MCF 10A (cell line): ENCODE measurements at regions of chr10 and their contacts with region 1.

Region 1: DNA sequence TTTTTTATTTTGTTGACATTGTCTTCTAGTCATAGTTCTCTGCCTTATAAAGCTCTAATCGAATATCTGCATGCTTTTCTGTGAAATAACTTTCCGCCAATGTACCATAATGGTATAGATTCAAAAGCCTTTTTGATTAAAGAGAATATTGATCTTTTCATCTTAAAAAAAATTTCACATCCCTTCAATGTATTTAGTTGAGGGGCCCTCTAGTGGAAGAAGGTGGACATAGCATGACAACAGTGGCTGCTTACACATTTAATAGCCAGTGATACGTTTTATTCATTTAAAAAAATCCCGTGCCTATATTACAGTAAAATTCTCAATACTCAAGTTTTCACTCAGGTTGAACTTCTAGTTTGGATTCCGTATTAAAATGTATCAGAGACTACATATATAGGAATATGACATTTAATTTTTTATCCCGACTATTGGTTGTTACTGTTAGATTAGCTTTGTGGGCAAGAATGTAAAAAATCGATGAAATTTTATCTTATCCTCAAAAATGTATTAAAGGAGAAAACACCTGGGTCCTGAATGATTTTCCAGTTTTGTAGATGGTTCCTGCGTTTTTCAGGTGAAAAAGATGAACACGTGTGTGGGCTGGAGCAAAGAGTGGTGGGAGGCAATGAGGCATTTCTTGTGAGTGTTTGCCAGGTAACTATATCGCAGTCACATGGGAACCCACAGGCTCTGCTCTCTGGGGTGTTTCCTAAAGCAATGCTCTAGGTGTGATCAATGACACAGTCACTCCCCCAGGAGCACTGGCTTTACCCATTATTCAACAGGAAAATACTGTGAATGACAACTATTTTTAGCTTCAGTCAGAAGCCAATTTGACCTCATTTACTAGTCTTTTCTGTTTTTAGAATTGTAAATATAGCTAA is 24.1 kb upstream of the PNLIP start:
- DNase-seq: peak; percentile 62
- H3K4me3 Mint-ChIP-seq: no peak overlapping the region
- H3K27ac Mint-ChIP-seq: no peak overlapping the region
- H3K4me1 Mint-ChIP-seq: peaks cover 5% of the 10 kb centered on the region
- H3K27me3 Mint-ChIP-seq: no peaks in the 10 kb centered on the region
- CTCF ChIP-seq: peak; percentile 63

Region 2: GRCh38 chr10:116371737-116372136 is 149.9 kb before region 1 on chr10:
- CTCF ChIA-PET with region 1: no interaction called
- POLR2A ChIA-PET with region 1: no interaction called
- intact Hi-C with region 1: no loop called
- DNase-seq: no peak
- H3K4me3 Mint-ChIP-seq: no peak overlapping the region
- H3K27ac Mint-ChIP-seq: no peak overlapping the region
- H3K4me1 Mint-ChIP-seq: peaks cover 5% of the 10 kb centered on the region
- H3K27me3 Mint-ChIP-seq: no peaks in the 10 kb centered on the region
- CTCF ChIP-seq: no peak

Region 3: GRCh38 chr10:116417821-116418220 is 103.8 kb before region 1 on chr10:
- CTCF ChIA-PET with region 1: no interaction called
- POLR2A ChIA-PET with region 1: no interaction called
- intact Hi-C with region 1: no loop called
- DNase-seq: peak; percentile 54
- H3K4me3 Mint-ChIP-seq: no peak overlapping the region
- H3K27ac Mint-ChIP-seq: peak overlapping the region; percentile 57
- H3K4me1 Mint-ChIP-seq: peaks cover 27% of the 10 kb centered on the region
- H3K27me3 Mint-ChIP-seq: no peaks in the 10 kb centered on the region
- CTCF ChIP-seq: no peak

Region 4: DNA sequence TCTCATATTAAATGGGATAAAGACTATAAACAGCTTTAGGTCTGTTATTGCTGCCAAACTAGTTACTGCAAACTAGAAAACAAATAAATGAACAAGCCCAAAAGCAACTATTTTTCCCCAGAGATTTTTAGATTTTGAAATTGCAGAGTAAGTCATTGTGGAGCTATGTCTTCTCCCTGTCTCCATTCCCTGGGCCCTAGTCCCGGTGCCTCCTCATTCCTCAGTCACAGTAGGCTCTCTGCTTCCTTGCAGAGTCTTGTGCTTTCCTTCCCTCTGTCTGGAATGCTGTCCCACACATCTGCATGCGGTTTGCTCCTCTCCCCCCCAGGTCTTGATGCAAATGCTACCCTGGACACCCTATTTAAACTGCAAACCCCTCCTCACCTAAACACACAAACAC is 90.0 kb before region 1 on chr10:
- CTCF ChIA-PET with region 1: no interaction called
- POLR2A ChIA-PET with region 1: no interaction called
- intact Hi-C with region 1: no loop called
- DNase-seq: no peak
- H3K4me3 Mint-ChIP-seq: no peak overlapping the region
- H3K27ac Mint-ChIP-seq: no peak overlapping the region
- H3K4me1 Mint-ChIP-seq: peaks cover 14% of the 10 kb centered on the region
- H3K27me3 Mint-ChIP-seq: no peaks in the 10 kb centered on the region
- CTCF ChIP-seq: no peak

Region 5: GRCh38 chr10:116460219-116460618 is 61.4 kb before region 1 on chr10:
- CTCF ChIA-PET with region 1: no interaction called
- POLR2A ChIA-PET with region 1: no interaction called
- intact Hi-C with region 1: no loop called
- DNase-seq: no peak
- H3K4me3 Mint-ChIP-seq: no peak overlapping the region
- H3K27ac Mint-ChIP-seq: no peak overlapping the region
- H3K4me1 Mint-ChIP-seq: no peaks in the 10 kb centered on the region
- H3K27me3 Mint-ChIP-seq: no peaks in the 10 kb centered on the region
- CTCF ChIP-seq: no peak

Region 6: DNA sequence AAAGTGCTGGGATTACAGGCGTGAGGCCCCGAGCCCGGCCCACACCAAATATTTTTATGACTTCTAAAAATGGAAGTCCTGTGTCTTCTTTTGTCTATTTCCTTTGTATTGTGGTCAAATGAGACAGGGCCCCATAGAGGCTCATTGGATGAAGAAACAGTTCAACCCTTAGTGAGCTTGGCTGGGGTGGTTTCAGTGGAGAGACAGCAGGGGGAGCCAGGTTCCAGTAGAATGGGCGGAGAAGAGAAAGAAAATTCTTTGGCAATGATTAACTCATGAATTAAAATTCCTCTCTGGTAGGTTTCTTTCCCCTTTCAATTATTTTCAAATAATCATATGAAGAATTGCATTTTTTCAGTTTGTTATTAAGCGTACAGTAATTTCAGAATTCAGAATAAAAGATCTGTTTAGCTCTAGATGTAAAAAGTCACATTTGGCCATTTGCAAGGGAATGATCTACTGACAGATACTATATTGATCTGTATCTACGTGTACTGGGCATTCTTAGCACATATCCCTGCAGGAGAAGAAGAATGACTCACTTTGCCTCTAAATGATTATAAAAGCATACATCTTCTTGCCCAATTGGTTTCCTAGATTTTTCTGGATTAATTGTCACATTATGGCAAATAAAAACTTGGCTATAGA is 50.8 kb before region 1 on chr10:
- CTCF ChIA-PET with region 1: interaction called, 5 read pairs
- POLR2A ChIA-PET with region 1: interaction called, 3 read pairs
- intact Hi-C with region 1: loop called (anchors 2 kb)
- DNase-seq: peak; percentile 58
- H3K4me3 Mint-ChIP-seq: no peak overlapping the region
- H3K27ac Mint-ChIP-seq: peak overlapping the region; percentile 54
- H3K4me1 Mint-ChIP-seq: peaks cover 10% of the 10 kb centered on the region
- H3K27me3 Mint-ChIP-seq: no peaks in the 10 kb centered on the region
- CTCF ChIP-seq: peak; percentile 46